ENCODE measurements at regions of chr1 and their contacts with region 1.

Region 1: DNA sequence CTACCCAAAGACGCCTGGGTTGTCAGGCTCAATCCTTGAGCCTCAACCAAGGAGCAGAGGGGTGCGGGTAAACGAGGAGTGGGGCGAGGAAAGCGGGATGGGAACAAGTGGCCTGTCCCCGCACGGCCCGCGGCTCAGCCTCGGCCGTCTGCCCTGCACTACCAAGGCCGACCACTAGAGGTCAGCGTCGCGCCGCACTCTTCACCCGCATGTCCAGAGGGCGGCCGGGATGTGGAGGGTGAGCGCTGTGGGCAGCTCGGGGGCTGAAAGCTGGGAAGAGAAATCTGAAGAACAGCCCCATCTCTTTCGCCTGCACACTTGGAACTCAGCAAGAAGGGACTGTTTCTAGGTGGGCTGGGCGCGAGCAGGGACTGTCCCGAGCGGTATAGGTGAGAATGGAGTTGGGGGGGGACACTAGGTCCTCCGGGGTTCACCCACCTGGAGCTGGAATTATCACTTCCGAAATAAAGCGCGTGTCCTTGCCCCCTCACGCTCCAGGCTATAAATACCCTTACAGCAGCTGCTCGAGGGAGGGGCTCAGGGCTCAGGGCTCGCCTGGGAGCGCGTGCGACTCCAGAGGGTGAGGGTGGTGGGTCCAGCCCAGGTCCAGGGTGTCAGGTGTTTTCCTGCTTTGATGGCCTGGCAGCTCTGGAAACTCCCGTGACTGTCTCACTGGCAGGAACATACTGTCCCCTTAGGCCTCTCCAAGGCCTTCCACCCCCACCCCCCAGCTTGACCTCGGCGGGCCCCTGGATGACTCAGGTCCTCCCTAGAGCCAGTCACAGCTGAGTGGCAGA is 9.8 kb downstream of the SLC30A2 start:
- DNase-seq: peak; percentile 47
- ATAC-seq: peak; percentile 88
- H3K4me3 ChIP-seq: peak overlapping the region; percentile 61 to 93 (median 73)
- H3K27ac ChIP-seq: peak overlapping the region; percentile 39
- H3K4me1 ChIP-seq: peaks cover 36% of the 10 kb centered on the region
- H3K27me3 ChIP-seq: peaks cover 0 to 50% of the 10 kb centered on the region in 2 experiments; a peak in 4 of 5 replicates
- CTCF ChIP-seq: peak; percentile 97
- EP300 ChIP-seq: no peak
- POLR2A ChIP-seq: no peak
- RAD21 ChIP-seq: peak; percentile 90

Region 2: DNA sequence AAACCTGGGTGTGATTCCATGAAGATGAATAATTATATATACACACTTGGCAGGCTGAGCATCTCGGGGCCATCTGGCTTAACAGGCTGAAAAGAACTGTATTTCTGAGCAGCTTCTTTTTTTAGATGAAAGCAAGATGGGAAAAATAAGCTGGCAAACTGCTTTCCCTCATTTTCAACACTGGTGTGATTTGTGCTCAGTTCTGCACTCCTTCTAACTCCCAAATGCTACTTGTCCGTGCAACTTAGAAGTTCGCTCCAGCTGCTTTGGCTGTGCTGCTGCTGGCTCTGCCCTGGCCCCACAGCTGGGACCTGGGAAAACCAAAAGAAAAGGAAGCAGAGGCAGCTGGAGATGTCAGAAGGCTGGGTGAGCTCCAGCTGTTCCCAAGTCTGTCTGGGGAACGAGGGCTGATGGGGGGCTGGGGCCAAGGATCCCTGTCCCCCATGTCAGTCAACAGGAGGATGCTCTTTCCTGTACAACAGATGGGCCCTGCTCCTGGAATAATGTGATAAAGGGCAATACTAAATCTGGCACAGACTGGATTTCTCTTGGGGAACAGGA is 83.2 kb before region 1 on chr1:
- CTCF ChIA-PET with region 1: no interaction called
- POLR2A ChIA-PET with region 1: no interaction called
- in situ Hi-C with region 1: no loop called
- intact Hi-C with region 1: no loop called
- DNase-seq: no peak
- ATAC-seq: no peak
- H3K4me3 ChIP-seq: no peak overlapping the region
- H3K27ac ChIP-seq: no peak overlapping the region
- H3K4me1 ChIP-seq: peaks cover 5% of the 10 kb centered on the region; the same call in 1 of the 2 replicates
- H3K27me3 ChIP-seq: no peaks in the 10 kb centered on the region
- CTCF ChIP-seq: no peak
- EP300 ChIP-seq: no peak
- POLR2A ChIP-seq: no peak
- RAD21 ChIP-seq: no peak

Region 3: DNA sequence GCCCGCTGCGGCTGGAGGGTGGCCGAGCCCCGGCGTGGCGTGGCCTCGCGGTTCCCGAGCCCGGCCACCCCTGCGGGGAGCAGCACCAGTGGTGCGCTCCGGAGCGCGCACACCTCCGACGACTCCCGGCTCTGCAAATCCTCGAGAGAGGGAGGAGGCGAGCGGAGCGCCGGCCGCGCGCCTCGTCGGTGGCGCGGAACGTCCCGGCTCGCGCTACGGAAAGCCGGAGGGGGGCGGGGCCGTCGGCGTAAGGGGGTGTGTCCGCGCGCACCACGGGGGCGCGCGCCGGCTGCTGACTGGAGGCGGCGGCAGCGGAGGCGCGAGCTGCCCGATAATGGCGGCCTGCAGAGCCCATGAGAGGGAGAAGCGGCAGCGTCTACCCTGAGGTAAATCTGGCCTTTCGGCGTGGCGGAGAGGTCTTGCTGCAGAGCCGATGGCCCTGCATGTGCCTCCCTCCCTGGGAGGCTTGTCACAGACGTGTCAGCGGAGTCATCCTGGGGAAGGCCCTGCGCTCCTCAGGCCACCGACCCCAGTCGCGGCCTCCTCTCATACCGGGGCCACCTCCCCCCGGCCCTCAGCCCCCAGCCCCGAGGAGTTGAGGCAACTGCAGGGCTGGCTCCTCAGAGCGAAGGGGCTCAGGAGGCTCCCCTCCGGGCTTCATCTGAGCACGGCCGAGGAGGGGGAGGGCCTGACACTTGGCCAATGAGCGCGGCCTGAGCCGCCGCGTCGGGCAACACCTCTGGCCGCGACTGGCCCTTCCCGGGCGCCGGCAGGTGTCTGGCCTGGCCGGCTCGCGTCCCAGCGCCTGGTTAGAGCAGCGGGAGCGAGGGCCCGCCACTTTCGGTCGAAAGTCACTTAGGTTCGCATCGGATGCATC is 75.6 kb after region 1 on chr1 and contains the start of gene PDIK1L:
- CTCF ChIA-PET with region 1: no interaction called
- POLR2A ChIA-PET with region 1: no interaction called
- in situ Hi-C with region 1: no loop called
- intact Hi-C with region 1: loop called (anchors 5 kb)
- DNase-seq: peak; percentile 84
- ATAC-seq: peak; percentile 93
- H3K4me3 ChIP-seq: peak within 1 kb of the TSS; percentile 73 to 98 (median 87)
- H3K27ac ChIP-seq: peak within 1 kb of the TSS; percentile 93
- H3K4me1 ChIP-seq: peaks cover 32% of the 10 kb centered on the region
- H3K27me3 ChIP-seq: no peaks in the 10 kb centered on the region; a peak in 1 of 5 replicates
- CTCF ChIP-seq: no peak
- EP300 ChIP-seq: no peak
- POLR2A ChIP-seq: peak; percentile 76
- RAD21 ChIP-seq: no peak; the same call in 1 of the 2 replicates
- total RNA-seq, gene PDIK1L: 4.6 and 5.8 TPM in 2 replicates

Region 4: DNA sequence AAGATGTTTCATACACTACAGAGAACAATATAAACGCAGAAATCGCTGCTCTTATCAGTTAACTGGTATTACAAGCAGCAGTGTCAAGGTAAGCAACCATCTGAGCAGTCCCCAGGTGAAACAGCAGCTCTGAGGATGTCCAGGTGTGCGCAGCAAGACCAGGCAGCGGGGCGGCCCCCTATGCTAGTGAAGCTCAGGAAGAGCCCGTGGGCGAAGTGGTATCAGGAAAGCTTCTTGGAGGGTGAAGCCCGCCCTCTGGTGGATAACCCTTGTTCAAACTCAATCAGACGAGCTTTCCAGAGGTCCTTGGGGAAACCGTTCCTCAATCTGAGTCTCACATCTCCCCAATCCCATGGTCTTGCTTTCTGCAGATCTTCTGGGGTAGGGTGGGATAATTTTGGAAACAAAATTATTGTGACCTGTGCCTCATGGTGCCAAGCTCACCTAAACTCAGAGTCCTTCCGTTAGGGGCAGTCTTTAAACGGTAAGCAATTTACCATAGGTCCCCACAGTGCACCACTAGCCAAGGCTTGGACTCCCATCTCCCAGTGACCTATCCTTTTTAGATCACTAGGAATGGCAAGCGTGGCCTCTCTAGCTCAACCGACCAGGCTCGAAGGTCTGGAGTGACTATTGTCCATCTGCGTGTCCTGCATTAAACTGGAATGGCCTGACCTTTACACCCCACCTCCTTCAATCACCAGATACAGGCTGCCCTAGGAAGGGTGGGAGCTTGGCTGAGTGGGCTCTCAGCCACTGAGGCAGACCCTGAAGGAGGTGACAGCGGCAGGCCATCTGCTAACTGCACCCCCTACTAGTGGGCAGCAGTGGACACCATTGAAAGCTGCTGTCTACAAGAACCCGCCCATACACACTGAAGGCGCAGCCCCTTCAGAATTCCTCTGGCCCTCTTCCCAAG is 109.1 kb after region 1 on chr1:
- CTCF ChIA-PET with region 1: interaction called, 11 read pairs
- POLR2A ChIA-PET with region 1: interaction called, 7 read pairs
- in situ Hi-C with region 1: no loop called
- intact Hi-C with region 1: loop called (anchors 1 kb)
- DNase-seq: peak; percentile 80
- ATAC-seq: peak; percentile 94
- H3K4me3 ChIP-seq: no peak overlapping the region
- H3K27ac ChIP-seq: no peak overlapping the region
- H3K4me1 ChIP-seq: peaks cover 9% of the 10 kb centered on the region; the same call in 1 of the 2 replicates
- H3K27me3 ChIP-seq: peaks cover 0 to 7% of the 10 kb centered on the region in 2 experiments; a peak in 4 of 5 replicates
- CTCF ChIP-seq: peak; percentile 87
- EP300 ChIP-seq: no peak
- POLR2A ChIP-seq: no peak
- RAD21 ChIP-seq: peak; percentile 83

Region 5: GRCh38 chr1:26161415-26162219 is 125.5 kb after region 1 on chr1:
- CTCF ChIA-PET with region 1: no interaction called
- POLR2A ChIA-PET with region 1: no interaction called
- in situ Hi-C with region 1: no loop called
- intact Hi-C with region 1: loop called (anchors 5 kb)
- DNase-seq: no peak
- ATAC-seq: peak; percentile 66
- H3K4me3 ChIP-seq: peak overlapping the region; percentile 42 to 76 (median 47); a peak in 5 of 6 replicates
- H3K27ac ChIP-seq: no peak overlapping the region
- H3K4me1 ChIP-seq: peaks cover 43% of the 10 kb centered on the region
- H3K27me3 ChIP-seq: peaks cover 12 to 68% of the 10 kb centered on the region in 2 experiments; a peak in 4 of 5 replicates
- CTCF ChIP-seq: peak; percentile 43; the same call in 1 of the 2 replicates
- EP300 ChIP-seq: no peak
- POLR2A ChIP-seq: no peak
- RAD21 ChIP-seq: 0 out of 2 replicates have a peak, but pooled peaks have one; percentile 34

Measured in HepG2 (cell line).